Adrenal gland (tissue), 19 donors: ENCODE measurements at regions of chr18 and their contacts with region 1.

Region 1: DNA sequence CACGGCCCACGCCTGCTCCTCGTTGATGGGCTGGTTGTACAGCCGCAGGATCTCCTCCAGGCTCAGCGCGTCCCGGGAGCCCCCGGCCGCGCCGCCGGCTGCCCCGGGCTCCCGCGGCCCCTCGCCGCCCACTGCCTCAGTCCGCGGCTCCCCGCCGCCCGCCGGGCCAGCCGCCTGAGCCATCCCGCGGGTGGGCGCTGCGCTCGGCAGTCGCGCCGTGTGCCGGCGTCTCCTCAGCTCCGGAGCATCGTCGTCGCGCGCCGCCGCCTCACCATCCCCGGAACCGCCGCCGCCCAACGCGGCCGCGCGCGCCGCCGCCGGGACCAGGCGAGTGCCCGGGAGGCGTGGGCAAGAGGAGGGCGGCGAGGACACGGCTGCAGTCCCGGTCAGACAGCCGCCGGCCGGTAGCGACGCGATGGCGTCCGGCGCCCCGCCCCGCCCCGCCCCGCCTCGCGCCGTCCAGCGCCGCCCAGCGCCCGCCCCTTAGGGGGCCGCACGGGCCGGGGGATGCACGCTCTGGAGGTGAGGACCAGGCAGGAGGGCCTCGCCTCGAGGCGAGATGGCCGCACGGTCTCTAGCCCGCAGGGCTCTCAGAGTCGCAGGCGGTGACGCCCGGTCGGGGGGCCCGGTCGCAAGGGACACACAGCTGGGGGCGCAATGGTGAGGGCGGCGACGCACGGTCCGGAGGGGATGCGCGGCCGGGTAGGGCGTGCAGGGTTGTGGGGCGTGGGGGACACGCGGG is at the start of gene SPIRE1:
- DNase-seq: peak; percentile 72 to 85 (median 77)
- H3K4me3 ChIP-seq: peak within 1 kb of the TSS; percentile 45 to 97 (median 53)
- H3K27ac ChIP-seq: peak within 1 kb of the TSS; percentile 84 to 99 (median 97)
- H3K4me1 ChIP-seq: peaks cover 12 to 42% of the 10 kb centered on the region in 2 donors
- H3K27me3 ChIP-seq: no peaks in the 10 kb centered on the region
- CTCF ChIP-seq: no peak
- POLR2A ChIP-seq: peak; percentile 48 to 82
- total RNA-seq, gene SPIRE1: 33.1 to 74.0 (median 55.6) TPM

Region 2: DNA sequence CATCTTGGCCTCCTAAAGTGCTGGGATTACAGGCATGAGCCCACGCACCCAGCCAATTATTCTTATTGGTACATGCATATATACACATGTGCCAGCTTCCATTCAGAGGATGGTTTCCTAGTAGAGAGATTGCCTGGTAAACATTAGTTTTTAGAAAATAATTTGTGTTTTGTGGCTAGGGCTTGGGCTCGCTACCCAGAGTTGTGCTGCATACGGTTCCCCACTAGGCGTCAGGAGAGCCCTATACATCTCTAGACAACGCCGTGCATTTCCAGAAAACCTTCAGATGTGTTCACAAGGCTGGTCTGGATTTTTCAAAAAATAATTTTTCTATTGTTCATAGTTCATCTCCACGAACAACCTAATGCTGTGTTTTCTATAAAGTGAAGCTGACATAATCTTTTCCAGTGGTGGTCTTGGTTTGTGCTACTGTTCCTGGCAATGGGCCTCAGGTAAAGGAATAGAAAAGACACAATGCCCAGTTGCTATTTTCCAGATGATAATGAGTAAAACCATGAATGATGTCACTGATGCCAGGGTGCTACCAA is 266.2 kb before region 1 on chr18:
- intact Hi-C with region 1: loop called (anchors 5 kb)
- DNase-seq: peak; percentile 52 to 86 (median 71)
- H3K4me3 ChIP-seq: no peak overlapping the region
- H3K27ac ChIP-seq: no peak overlapping the region
- H3K4me1 ChIP-seq: no peaks in the 10 kb centered on the region
- H3K27me3 ChIP-seq: no peaks in the 10 kb centered on the region
- CTCF ChIP-seq: peak; percentile 82 to 97 (median 93)
- POLR2A ChIP-seq: no peak

Region 3: GRCh38 chr18:12543697-12544096 is 114.2 kb before region 1 on chr18:
- intact Hi-C with region 1: loop called in 1 of 2 experiments (anchors 10 kb)
- DNase-seq: no peak
- H3K4me3 ChIP-seq: no peak overlapping the region
- H3K27ac ChIP-seq: no peak overlapping the region
- H3K4me1 ChIP-seq: no peaks in the 10 kb centered on the region
- H3K27me3 ChIP-seq: no peaks in the 10 kb centered on the region
- CTCF ChIP-seq: no peak
- POLR2A ChIP-seq: no peak